Heart right ventricle (tissue), 16 donors: ENCODE measurements at regions of chr7 and their contacts with region 1.

Region 1: DNA sequence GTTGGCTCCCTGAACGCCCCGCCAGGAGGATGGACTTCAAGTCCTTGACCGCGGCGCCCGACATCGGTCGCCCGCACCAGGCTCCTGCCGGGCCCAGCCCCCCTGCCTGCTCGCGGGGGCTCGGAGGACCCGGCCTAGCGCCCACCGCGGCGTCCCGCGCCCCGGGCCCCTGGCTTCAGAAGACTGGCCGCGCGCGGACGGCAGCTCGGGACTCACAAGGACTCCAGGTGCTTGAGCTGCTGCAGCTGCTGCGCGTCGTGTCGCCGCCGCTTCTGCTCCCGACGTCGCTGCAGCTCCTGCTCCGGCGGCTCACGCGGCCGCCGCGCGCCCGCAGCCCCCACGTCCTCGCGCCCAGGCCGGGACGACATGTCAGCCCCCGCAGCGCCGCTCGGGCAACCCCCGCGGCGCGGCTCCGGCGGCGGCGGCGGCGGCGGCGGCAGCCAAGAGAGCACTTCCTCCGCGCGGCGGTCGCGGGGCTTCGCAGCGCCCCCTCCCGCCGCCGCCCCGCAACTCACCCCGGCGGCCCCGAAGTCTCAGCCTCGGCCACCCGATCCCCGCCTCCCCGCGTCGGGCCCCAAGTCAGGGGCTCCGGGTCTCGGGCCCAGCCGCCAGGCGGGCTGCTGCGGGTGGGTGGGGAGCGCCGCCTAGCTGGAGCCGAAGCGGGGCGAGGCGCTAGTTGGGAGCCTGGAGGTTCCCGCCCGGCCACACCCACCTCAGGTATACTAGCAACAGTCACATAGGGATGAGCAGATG is at the start of gene RP9:
- DNase-seq: peak; percentile 57 to 76
- ATAC-seq: peak; percentile 69 to 95 (median 86)
- H3K4me3 ChIP-seq: peak within 1 kb of the TSS; percentile 84 to 99 (median 98)
- H3K27ac ChIP-seq: peak within 1 kb of the TSS; percentile 56 to 94 (median 90)
- H3K4me1 ChIP-seq: peaks cover 12 to 54% (median 44%) of the 10 kb centered on the region in 9 donors
- H3K27me3 ChIP-seq: peaks cover 0 to 9% (median 0%) of the 10 kb centered on the region in 7 donors
- CTCF ChIP-seq: peak; percentile 52 to 83 (median 67)
- total RNA-seq, gene RP9: 12.9 to 21.5 (median 18.8) TPM

Region 2: GRCh38 chr7:32694182-32694581 is 415.0 kb before region 1 on chr7:
- intact Hi-C with region 1: loop called in 1 of 10 experiments (anchors 10 kb)
- DNase-seq: no peak
- ATAC-seq: no peak
- H3K4me3 ChIP-seq: no peak overlapping the region
- H3K27ac ChIP-seq: no peak overlapping the region
- H3K4me1 ChIP-seq: peaks cover 0 to 10% (median 0%) of the 10 kb centered on the region in 9 donors
- H3K27me3 ChIP-seq: no peaks in the 10 kb centered on the region
- CTCF ChIP-seq: no peak

Region 3: DNA sequence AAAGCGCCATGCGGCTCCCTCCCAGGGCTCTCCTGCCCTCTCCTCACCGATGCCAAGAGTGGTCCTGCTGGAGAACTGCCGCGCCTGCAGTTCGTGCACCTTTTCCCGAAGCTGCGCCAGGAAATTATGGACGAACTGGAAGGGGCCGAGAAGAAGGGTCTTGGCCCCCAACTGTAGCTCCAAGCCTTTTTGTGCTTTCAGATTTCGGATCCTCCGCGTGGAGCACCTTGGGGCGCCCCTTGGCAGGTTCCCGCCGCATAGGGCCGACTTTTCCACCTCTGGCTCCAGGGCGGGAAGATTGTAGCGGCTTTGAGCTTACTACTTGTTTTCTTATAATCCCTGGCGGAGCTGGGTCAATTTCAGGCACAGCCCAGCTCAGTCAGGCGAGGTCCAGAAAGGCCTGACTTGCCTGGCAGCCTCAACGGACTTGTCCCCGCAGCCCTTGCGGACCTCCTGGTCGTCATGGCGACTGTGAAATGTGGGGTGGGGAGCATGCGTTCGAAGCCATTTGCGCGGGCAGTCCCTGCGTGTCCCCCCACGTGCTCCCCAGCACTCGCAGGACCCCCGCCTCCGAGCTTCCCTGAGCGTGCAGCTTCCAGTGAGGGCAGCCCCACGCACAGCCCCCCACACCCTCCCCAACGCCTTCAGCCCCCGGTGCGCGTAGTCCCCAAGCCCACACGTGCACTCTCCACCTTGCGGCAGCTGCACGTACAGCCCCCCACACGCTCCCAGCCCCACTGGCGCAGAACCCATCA is 347.6 kb before region 1 on chr7:
- intact Hi-C with region 1: loop called in 3 of 10 experiments (anchors 2 to 10 kb)
- DNase-seq: peak in 1 of 2 donors; percentile 18
- ATAC-seq: peak in 6 of 8 donors; percentile 10 to 86 (median 33)
- H3K4me3 ChIP-seq: peak overlapping the region in 1 of 10 donors; percentile 3
- H3K27ac ChIP-seq: peak overlapping the region in 7 of 10 donors; percentile 37 to 82 (median 57)
- H3K4me1 ChIP-seq: peaks cover 0 to 14% (median 5%) of the 10 kb centered on the region in 9 donors
- H3K27me3 ChIP-seq: peaks cover 0 to 26% (median 0%) of the 10 kb centered on the region in 7 donors
- CTCF ChIP-seq: no peak

Region 4: GRCh38 chr7:32803406-32804141 is 305.6 kb before region 1 on chr7:
- intact Hi-C with region 1: loop called in 4 of 10 experiments (anchors 5 to 10 kb)
- DNase-seq: no peak
- ATAC-seq: no peak
- H3K4me3 ChIP-seq: no peak overlapping the region
- H3K27ac ChIP-seq: no peak overlapping the region
- H3K4me1 ChIP-seq: peaks cover 0 to 3% (median 0%) of the 10 kb centered on the region in 9 donors
- H3K27me3 ChIP-seq: no peaks in the 10 kb centered on the region
- CTCF ChIP-seq: no peak

Region 5: GRCh38 chr7:32846701-32847100 is 262.5 kb before region 1 on chr7:
- intact Hi-C with region 1: loop called in 2 of 10 experiments (anchors 2 to 5 kb)
- DNase-seq: peak; percentile 81 to 91
- ATAC-seq: peak; percentile 96 to 100 (median 98)
- H3K4me3 ChIP-seq: peak overlapping the region in 4 of 10 donors; percentile 3 to 16 (median 10)
- H3K27ac ChIP-seq: no peak overlapping the region
- H3K4me1 ChIP-seq: peaks cover 0 to 10% (median 3%) of the 10 kb centered on the region in 9 donors
- H3K27me3 ChIP-seq: no peaks in the 10 kb centered on the region
- CTCF ChIP-seq: peak; percentile 57 to 96 (median 94)

Region 6: GRCh38 chr7:32942786-32943653 is 166.2 kb before region 1 on chr7:
- intact Hi-C with region 1: loop called in 2 of 10 experiments (anchors 2 to 10 kb)
- DNase-seq: peak; percentile 75 to 85
- ATAC-seq: peak; percentile 93 to 97 (median 96)
- H3K4me3 ChIP-seq: peak overlapping the region; percentile 40 to 99 (median 87)
- H3K27ac ChIP-seq: peak overlapping the region; percentile 76 to 99 (median 98)
- H3K4me1 ChIP-seq: peaks cover 0 to 43% (median 30%) of the 10 kb centered on the region in 9 donors
- H3K27me3 ChIP-seq: no peaks in the 10 kb centered on the region
- CTCF ChIP-seq: peak; percentile 59 to 87 (median 73)

Region 7: GRCh38 chr7:33062782-33063443 is 46.3 kb before region 1 on chr7:
- intact Hi-C with region 1: loop called in 2 of 10 experiments (anchors 5 kb)
- DNase-seq: peak; percentile 93 to 95
- ATAC-seq: peak; percentile 99 to 100 (median 99)
- H3K4me3 ChIP-seq: peak overlapping the region; percentile 58 to 95 (median 83)
- H3K27ac ChIP-seq: peak overlapping the region; percentile 85 to 98 (median 94)
- H3K4me1 ChIP-seq: peaks cover 3 to 44% (median 23%) of the 10 kb centered on the region in 9 donors
- H3K27me3 ChIP-seq: no peaks in the 10 kb centered on the region
- CTCF ChIP-seq: no peak

Region 8: DNA sequence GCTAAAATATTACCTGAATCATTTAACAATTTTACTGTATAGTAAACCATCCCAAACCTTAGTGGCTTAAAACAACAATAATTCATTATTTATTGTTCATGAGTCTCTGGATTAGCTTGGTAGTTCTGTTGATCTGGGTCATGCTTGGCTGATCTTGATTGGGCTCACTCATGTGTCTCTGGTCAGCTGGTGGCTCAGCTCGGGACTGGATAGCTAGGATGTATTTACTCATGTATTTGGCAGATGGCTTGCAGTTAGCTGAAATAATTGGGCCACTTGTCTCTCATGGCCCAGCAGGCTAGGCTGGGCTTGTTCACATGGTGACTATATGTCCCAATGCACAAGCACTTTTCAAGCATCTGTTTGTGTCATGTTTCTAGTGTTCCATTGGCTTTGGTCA is 283.0 kb after region 1 on chr7:
- intact Hi-C with region 1: no loop called
- DNase-seq: no peak
- ATAC-seq: no peak
- H3K4me3 ChIP-seq: no peak overlapping the region
- H3K27ac ChIP-seq: no peak overlapping the region
- H3K4me1 ChIP-seq: no peaks in the 10 kb centered on the region
- H3K27me3 ChIP-seq: no peaks in the 10 kb centered on the region
- CTCF ChIP-seq: no peak